ENCODE measurements at regions of chr6 and their contacts with region 1.

Region 1: DNA sequence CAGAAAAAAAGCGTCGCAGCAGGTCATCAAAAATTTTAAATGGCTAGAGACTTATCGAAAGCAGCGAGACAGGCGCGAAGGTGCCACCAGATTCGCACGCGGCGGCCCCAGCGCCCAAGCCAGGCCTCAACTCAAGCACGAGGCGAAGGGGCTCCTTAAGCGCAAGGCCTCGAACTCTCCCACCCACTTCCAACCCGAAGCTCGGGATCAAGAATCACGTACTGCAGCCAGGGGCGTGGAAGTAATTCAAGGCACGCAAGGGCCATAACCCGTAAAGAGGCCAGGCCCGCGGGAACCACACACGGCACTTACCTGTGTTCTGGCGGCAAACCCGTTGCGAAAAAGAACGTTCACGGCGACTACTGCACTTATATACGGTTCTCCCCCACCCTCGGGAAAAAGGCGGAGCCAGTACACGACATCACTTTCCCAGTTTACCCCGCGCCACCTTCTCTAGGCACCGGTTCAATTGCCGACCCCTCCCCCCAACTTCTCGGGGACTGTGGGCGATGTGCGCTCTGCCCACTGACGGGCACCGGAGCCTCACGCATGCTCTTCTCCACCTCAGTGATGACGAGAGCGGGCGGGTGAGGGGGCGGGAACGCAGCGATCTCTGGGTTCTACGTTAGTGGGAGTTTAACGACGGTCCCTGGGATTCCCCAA is at the start of gene EEF1A1:
- DNase-seq: peak; percentile 95 to 100 (median 99)
- ATAC-seq: peak; percentile 74 to 79
- H3K4me3 Mint-ChIP-seq: peak within 1 kb of the TSS; percentile 90 to 98 (median 95)
- H3K27ac Mint-ChIP-seq: peak within 1 kb of the TSS; percentile 95 to 99 (median 98)
- H3K4me1 Mint-ChIP-seq: peaks cover 28 to 68% (median 63%) of the 10 kb centered on the region in 4 donors
- H3K27me3 Mint-ChIP-seq: peaks cover 0 to 3% (median 0%) of the 10 kb centered on the region in 5 donors
- polyA plus RNA-seq, gene EEF1A1: 14,095 to 14,658 (median 14,646) TPM

Region 2: GRCh38 chr6:73532293-73532692 is 11.5 kb after region 1 on chr6:
- POLR2A ChIA-PET with region 1: interaction called, 17 read pairs
- DNase-seq: no peak
- ATAC-seq: no peak
- H3K4me3 Mint-ChIP-seq: no peak overlapping the region
- H3K27ac Mint-ChIP-seq: no peak overlapping the region
- H3K4me1 Mint-ChIP-seq: no peaks in the 10 kb centered on the region
- H3K27me3 Mint-ChIP-seq: no peaks in the 10 kb centered on the region

Region 3: GRCh38 chr6:73585566-73586415 is 65.0 kb after region 1 on chr6:
- POLR2A ChIA-PET with region 1: interaction called, 198 read pairs
- DNase-seq: peak in 8 of 10 donors; percentile 18 to 68 (median 56)
- ATAC-seq: peak; percentile 85
- H3K4me3 Mint-ChIP-seq: peak overlapping the region; percentile 78 to 92 (median 88)
- H3K27ac Mint-ChIP-seq: peak overlapping the region; percentile 98 to 100 (median 99)
- H3K4me1 Mint-ChIP-seq: peaks cover 12 to 47% (median 32%) of the 10 kb centered on the region in 4 donors
- H3K27me3 Mint-ChIP-seq: no peaks in the 10 kb centered on the region

Region 4: DNA sequence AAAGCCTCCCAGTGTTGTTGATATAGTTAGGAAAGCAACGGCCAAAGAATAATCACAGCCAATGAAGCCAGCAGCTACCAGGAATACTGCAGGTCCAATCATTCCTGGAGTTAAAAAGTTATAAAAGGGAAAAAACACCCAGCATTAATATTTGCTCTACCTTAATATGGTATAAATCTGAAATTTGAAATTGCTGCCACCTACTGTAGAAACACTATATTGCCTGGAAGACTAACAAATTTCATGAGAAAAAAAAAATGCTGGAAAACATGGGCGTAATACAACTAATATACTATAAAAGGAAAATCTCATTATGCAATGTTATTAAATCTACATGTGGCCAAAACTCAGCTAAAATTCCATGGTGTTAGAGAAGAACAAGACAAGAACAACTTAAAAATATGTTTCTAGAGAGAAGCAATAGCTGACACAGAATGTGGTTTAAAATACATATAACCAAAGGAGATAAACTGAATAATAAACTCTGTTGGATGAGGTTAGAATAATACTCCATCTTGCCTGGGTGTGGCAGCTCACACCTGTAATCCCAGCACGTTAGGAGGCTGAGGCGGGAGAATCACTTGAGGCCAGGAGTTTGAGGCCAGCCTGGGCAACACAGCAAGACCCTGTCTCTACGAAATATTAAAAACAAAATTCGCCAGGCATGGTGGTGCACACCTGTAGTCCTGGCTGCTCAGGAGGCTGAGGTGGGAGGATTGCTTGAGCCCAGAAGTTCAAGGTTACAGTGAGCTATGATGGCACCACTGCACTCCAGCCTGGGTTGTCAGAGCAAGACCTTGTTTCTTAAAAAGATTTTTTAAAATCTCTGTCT is 89.8 kb after region 1 on chr6:
- POLR2A ChIA-PET with region 1: interaction called, 62 read pairs
- DNase-seq: peak in 3 of 10 donors; percentile 62 to 66 (median 62)
- ATAC-seq: peak; percentile 47 to 67
- H3K4me3 Mint-ChIP-seq: no peak overlapping the region
- H3K27ac Mint-ChIP-seq: peak overlapping the region in 2 of 10 donors; percentile 5 to 53
- H3K4me1 Mint-ChIP-seq: peaks cover 0 to 7% (median 5%) of the 10 kb centered on the region in 4 donors
- H3K27me3 Mint-ChIP-seq: no peaks in the 10 kb centered on the region

Region 5: GRCh38 chr6:73636048-73636675 is 115.3 kb after region 1 on chr6:
- POLR2A ChIA-PET with region 1: no interaction called
- DNase-seq: no peak
- ATAC-seq: no peak
- H3K4me3 Mint-ChIP-seq: no peak overlapping the region
- H3K27ac Mint-ChIP-seq: no peak overlapping the region
- H3K4me1 Mint-ChIP-seq: no peaks in the 10 kb centered on the region
- H3K27me3 Mint-ChIP-seq: no peaks in the 10 kb centered on the region